ENCODE measurements at regions of chr2 and their contacts with region 1.

Region 1: DNA sequence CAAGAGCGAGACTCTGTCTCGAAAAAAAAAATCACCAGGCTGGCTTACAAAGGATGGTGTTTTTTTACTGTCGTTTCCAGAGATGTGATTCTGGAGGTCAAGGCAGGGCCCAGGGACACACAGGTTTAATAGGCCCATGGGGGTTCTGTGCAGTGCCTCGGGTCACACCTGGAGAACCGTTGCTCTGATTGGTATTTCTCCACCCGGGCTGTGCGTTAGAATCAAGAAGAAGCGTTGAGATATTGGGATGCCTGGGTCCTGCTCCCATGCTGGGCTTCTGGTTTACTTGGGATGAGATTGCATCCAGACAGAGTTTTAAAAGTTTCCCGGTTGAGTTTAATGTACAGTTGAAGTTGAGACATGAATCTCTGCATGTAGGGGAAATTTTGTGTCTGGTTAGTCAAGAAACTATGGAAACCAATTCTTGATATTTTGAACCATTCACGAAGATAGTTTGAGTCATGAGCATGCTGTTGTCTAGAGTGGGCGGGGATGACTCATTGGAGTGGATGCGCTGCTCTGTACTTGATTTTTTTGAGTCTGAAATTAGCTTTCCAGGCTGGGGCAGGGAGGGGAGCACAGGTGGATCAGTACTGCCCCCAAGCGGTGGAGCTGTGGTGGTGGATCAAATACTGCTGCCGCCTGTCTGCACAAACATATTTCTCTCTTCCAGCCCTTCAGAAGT is 50.1 kb downstream of the GREB1 start:
- DNase-seq: peak; percentile 86 to 88
- ATAC-seq: peak; percentile 54 to 84
- H3K4me3 ChIP-seq: no peak overlapping the region
- H3K27ac ChIP-seq: peak overlapping the region; percentile 21 to 34; a peak in 4 of 6 replicates
- H3K4me1 ChIP-seq: peaks cover 21% of the 10 kb centered on the region
- CTCF ChIP-seq: peak; percentile 96
- EP300 ChIP-seq: no peak
- POLR2A ChIP-seq: no peak
- RAD21 ChIP-seq: peak; percentile 96 to 98

Region 2: DNA sequence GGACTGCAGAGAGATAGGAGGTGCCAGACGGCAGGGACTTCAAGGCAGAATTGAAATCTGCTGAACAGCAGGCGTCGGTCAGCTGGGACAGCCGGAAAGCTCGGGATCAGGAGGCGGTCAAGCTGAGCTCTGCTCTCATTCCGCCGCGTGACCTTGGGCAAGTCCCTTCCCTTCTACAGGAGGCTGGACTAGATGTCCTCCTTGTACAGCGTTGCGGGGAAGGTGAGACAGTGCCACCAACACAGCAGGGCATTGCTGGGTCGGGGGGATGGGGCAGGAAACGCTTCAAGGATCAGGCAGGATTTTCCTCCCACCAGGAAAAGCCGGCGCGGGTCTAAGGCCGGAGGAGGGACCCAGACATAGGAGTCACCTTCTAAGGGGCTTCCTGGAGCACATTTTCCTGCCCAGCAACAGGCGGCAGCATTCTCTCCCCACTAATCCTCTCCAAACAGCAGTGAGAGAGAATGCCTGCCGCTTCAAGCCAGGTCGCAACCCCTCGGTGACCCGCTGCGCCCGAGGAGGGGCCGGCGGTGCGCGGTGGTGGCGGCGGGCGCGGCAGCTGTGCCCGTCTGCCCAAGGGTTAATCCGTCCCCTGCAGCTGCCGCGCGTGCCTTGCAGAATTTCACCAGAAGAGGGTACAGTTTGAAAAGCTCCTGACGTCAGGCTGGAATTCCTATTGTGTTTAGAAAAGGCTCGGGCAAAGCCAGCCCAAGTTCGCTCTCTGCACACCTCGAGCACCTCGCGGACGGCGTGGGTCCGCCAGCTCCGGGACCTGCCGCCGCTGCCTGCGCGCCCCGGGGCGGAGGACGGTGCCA is 672.5 kb before region 1 on chr2 and contains the start of gene KCNF1:
- CTCF ChIA-PET with region 1: interaction called, 10 read pairs
- POLR2A ChIA-PET with region 1: no interaction called
- DNase-seq: peak; percentile 79 to 83
- ATAC-seq: peak; percentile 75 to 82
- H3K4me3 ChIP-seq: peak within 1 kb of the TSS; percentile 57
- H3K27ac ChIP-seq: peak within 1 kb of the TSS; percentile 79 to 93
- H3K4me1 ChIP-seq: peaks cover 13% of the 10 kb centered on the region
- CTCF ChIP-seq: peak; percentile 52
- EP300 ChIP-seq: no peak
- POLR2A ChIP-seq: peak; percentile 38
- RAD21 ChIP-seq: peak; percentile 54 to 74
- polyA plus RNA-seq, gene KCNF1: 4.4 and 5.6 TPM in 2 replicates

Region 3: DNA sequence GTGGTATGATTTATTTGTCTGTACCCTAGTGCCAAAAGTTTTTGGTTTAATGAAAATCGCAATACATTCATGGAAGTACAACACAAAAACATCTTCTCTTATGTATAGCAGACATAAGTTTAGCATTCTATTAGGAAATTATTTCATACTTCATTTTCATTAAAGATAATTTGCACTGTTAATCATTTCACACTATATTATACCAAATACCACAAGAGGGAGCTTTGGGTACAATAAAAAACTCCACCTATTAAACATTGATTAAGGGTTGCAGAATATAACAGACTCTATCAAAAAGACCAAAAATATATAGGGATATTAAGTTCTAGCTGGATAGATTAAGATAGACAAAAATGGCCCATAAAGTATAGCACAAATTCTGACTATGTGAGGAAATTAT is 349.7 kb before region 1 on chr2:
- CTCF ChIA-PET with region 1: interaction called, 19 read pairs
- POLR2A ChIA-PET with region 1: no interaction called
- DNase-seq: no peak
- ATAC-seq: peak in 1 of 2 experiments; percentile 73; a peak in 2 of 6 replicates
- H3K4me3 ChIP-seq: no peak overlapping the region
- H3K27ac ChIP-seq: no peak overlapping the region
- H3K4me1 ChIP-seq: peaks cover 26% of the 10 kb centered on the region; the same call in 2 of the 3 replicates
- CTCF ChIP-seq: peak; percentile 82
- EP300 ChIP-seq: no peak
- POLR2A ChIP-seq: no peak
- RAD21 ChIP-seq: peak; percentile 80 to 91

Region 4: GRCh38 chr2:11270891-11271290 is 313.1 kb before region 1 on chr2:
- CTCF ChIA-PET with region 1: no interaction called
- POLR2A ChIA-PET with region 1: no interaction called
- DNase-seq: no peak
- ATAC-seq: peak in 1 of 2 experiments; percentile 51; a peak in 3 of 6 replicates
- H3K4me3 ChIP-seq: no peak overlapping the region
- H3K27ac ChIP-seq: no peak overlapping the region
- H3K4me1 ChIP-seq: peaks cover 12% of the 10 kb centered on the region; the same call in 2 of the 3 replicates
- CTCF ChIP-seq: no peak
- EP300 ChIP-seq: no peak
- POLR2A ChIP-seq: no peak
- RAD21 ChIP-seq: no peak

Region 5: GRCh38 chr2:11498543-11499080 is 85.4 kb before region 1 on chr2:
- CTCF ChIA-PET with region 1: interaction called, 73 read pairs
- POLR2A ChIA-PET with region 1: no interaction called
- DNase-seq: no peak
- ATAC-seq: peak; percentile 44 to 67; a peak in 5 of 6 replicates
- H3K4me3 ChIP-seq: no peak overlapping the region
- H3K27ac ChIP-seq: 0 out of 6 replicates have a peak overlapping the region, but pooled peaks of 1 of the 2 experiments have one; percentile 14
- H3K4me1 ChIP-seq: peaks cover 8% of the 10 kb centered on the region
- CTCF ChIP-seq: no peak
- EP300 ChIP-seq: no peak
- POLR2A ChIP-seq: no peak
- RAD21 ChIP-seq: no peak

Region 6: GRCh38 chr2:11573418-11574175 is 10.4 kb before region 1 on chr2:
- CTCF ChIA-PET with region 1: interaction called, 261 read pairs
- POLR2A ChIA-PET with region 1: no interaction called
- DNase-seq: no peak
- ATAC-seq: no peak
- H3K4me3 ChIP-seq: no peak overlapping the region
- H3K27ac ChIP-seq: no peak overlapping the region
- H3K4me1 ChIP-seq: no peaks in the 10 kb centered on the region
- CTCF ChIP-seq: no peak
- EP300 ChIP-seq: no peak
- POLR2A ChIP-seq: no peak
- RAD21 ChIP-seq: no peak

Region 7: DNA sequence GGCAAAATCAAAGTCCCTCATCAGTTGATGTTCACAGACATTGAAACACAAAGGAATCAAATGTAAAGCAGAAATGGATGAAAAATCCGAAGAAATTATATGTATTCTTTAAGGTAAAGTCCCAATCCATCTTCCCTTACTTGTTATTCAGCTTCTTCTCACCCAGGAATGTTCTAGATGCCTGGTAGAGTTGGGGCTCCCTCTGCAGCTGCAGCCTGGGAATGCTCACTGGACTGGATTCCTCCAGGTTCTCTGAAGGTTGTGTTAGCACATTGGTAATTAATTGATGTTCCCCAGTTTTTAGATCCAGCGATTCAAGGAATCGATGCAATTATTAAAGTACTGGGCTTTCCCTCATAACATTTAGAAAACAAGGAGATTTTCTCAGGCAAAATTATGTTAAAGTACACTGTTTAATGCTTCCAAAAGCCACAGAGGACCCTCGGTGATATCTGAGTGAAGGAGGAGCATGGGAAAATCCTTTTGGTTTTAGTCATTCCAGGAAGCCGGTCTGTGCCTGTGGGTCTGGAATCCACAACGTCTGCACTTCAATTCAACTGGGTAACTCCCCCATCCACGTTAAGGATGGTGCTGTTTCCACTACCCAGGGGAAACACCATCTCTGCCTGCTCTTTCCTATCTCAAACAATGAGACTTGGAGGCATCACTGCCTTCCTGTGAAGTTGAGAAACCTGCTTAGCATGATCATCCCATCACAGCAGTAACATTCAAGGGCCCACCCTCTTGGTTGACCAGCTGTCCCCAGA is 64.0 kb after region 1 on chr2:
- CTCF ChIA-PET with region 1: interaction called, 14 read pairs
- POLR2A ChIA-PET with region 1: no interaction called
- DNase-seq: no peak
- ATAC-seq: 0 out of 6 replicates have a peak, but pooled peaks of 1 of the 2 experiments have one; percentile 38
- H3K4me3 ChIP-seq: no peak overlapping the region
- H3K27ac ChIP-seq: no peak overlapping the region
- H3K4me1 ChIP-seq: no peaks in the 10 kb centered on the region
- CTCF ChIP-seq: no peak
- EP300 ChIP-seq: no peak
- POLR2A ChIP-seq: no peak
- RAD21 ChIP-seq: peak in 1 of 2 experiments; percentile 22; a peak in 1 of 5 replicates